ENCODE measurements at regions of chr20 and their contacts with region 1.

Region 1: GRCh38 chr20:34876162-34877001 is at the start of gene ACSS2:
- DNase-seq: peak; percentile 100
- total RNA-seq, gene ACSS2: 37.4 to 43.1 TPM

Region 2: GRCh38 chr20:34955232-34956040 is 79.1 kb after region 1 on chr20 and contains the starts of genes GSS and MYH7B:
- intact Hi-C with region 1: loop called (anchors 2 to 5 kb)
- DNase-seq: peak; percentile 100
- total RNA-seq, gene GSS: 23.2 to 25.5 TPM
- total RNA-seq, gene MYH7B: 0.42 to 0.57 TPM

Region 3: GRCh38 chr20:35207950-35208611 is 331.7 kb after region 1 on chr20:
- intact Hi-C with region 1: loop called in 1 of 2 experiments (anchors 10 kb)
- DNase-seq: peak; percentile 92